PC-3 (cell line): ENCODE measurements at regions of chr18 and their contacts with region 1.

Region 1: DNA sequence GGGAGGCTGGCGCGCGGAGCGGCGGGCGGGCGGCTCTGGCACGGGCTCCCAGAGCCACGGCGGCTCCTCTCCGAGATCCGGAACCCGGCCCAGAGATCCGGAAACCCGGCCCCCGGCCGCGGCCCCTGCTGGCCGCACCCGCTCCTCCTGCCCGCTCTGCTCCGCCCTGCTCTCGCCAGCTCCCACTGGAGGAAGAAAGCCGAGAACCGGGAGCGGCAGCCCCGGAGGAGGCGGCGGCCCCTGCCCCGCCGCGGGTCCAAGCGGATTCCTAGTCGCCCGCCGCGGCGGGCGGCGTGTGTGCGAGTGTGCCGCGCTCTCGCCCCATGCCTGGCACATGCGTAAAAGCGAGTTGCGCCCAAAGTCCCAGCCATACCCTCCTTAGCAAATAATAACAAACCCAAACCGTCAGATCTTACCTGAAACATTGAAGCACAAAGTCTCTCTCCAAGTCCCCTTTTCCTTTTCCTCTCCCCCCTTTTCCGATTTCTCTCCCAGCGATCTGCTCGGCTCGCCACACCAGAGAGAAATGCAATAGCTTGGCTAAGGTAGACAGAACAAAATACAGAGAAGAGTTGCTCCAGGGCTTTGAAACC is 108.7 kb upstream of the KCTD1 start:
- DNase-seq: peak; percentile 68
- ATAC-seq: peak; percentile 73
- H3K4me3 ChIP-seq: peak overlapping the region; percentile 77
- H3K27ac ChIP-seq: no peak overlapping the region
- H3K4me1 ChIP-seq: peaks cover 10% of the 10 kb centered on the region
- H3K27me3 ChIP-seq: peaks cover 52% of the 10 kb centered on the region
- CTCF ChIP-seq: peak; percentile 25; the same call in 1 of the 2 replicates

Region 2: GRCh38 chr18:26002375-26002910 is 654.6 kb before region 1 on chr18:
- CTCF ChIA-PET with region 1: no interaction called
- POLR2A ChIA-PET with region 1: no interaction called
- intact Hi-C with region 1: no loop called
- DNase-seq: no peak
- ATAC-seq: no peak
- H3K4me3 ChIP-seq: no peak overlapping the region
- H3K27ac ChIP-seq: no peak overlapping the region
- H3K4me1 ChIP-seq: no peaks in the 10 kb centered on the region
- H3K27me3 ChIP-seq: no peaks in the 10 kb centered on the region
- CTCF ChIP-seq: no peak

Region 3: DNA sequence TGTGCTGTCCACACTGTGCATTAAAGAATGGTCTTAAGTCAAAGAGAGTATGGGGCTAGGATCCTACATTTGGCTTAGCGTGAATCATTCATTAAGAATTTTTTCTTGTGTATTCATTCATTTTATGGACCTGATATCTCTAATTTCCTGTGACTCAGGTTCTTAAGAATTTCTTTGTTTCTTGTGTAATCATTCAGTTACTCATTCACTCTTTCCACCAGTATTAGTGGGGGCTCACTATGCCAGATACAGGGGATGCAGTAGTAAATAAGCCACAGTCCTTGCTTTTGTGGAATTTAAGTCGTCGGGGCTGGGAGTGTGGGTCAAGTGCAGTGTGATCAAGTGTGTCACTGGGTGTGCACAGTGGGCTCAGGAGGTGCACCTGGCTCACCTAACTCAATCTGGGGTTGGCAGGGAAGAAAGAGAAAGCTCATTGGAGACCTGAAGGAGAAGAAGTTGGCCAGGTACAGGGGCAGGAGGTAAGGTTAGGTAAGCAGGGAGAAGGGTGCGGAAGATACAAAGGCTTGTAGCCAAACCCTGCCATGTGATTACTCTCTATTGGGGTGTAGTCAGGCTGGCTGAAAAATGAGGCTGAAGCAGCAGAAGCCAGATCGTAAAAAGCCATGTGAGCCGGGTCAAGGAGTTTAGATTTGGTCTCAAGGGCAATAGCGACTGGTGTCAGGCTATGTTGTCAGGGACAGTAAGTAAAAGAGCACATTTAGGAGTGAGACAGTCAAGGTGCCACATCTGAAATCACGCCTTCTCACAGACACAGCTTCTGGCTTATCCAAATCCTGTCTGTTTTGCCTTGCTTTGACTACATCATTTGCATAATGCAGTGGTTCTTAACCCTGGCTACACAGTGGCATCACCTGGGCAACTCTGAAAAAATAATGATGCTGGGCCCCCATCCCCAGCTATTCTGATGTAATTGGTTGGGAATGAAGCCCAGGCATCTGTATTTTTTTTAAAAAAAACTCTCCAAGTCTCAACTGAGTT is 175.8 kb before region 1 on chr18:
- CTCF ChIA-PET with region 1: no interaction called
- POLR2A ChIA-PET with region 1: no interaction called
- intact Hi-C with region 1: loop called (anchors 2 kb)
- DNase-seq: peak; percentile 98
- ATAC-seq: peak; percentile 83
- H3K4me3 ChIP-seq: peak overlapping the region; percentile 48
- H3K27ac ChIP-seq: peak overlapping the region; percentile 97
- H3K4me1 ChIP-seq: peaks cover 73% of the 10 kb centered on the region
- H3K27me3 ChIP-seq: no peaks in the 10 kb centered on the region
- CTCF ChIP-seq: no peak

Region 4: GRCh38 chr18:26746279-26747150 is 89.5 kb after region 1 on chr18:
- CTCF ChIA-PET with region 1: interaction called, 3 read pairs
- POLR2A ChIA-PET with region 1: no interaction called
- intact Hi-C with region 1: loop called (anchors 1 kb)
- DNase-seq: peak; percentile 67
- ATAC-seq: peak; percentile 58
- H3K4me3 ChIP-seq: peak overlapping the region; percentile 53
- H3K27ac ChIP-seq: peak overlapping the region; percentile 94
- H3K4me1 ChIP-seq: peaks cover 45% of the 10 kb centered on the region
- H3K27me3 ChIP-seq: no peaks in the 10 kb centered on the region
- CTCF ChIP-seq: no peak

Region 5: DNA sequence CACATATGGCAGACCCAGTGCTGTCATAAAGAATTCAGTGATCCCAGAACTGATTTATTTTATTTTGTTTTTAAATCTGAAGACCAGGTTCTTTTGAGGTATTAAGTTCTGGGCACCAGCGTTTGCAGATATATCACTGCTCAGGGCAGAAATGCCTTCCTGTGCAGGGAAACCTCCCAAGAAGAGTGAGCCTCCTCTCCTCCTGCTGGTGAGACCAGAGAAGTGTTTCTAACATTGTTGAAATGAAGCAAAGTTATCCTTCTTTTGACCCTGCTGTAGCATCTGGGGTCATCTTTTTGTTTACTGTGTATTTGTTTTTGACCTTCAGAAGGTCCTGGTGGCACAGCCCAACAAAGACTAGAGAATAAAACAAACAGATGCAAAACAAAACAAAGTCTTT is 114.5 kb after region 1 on chr18:
- CTCF ChIA-PET with region 1: no interaction called
- POLR2A ChIA-PET with region 1: no interaction called
- intact Hi-C with region 1: loop called (anchors 10 kb)
- DNase-seq: peak; percentile 34
- ATAC-seq: no peak
- H3K4me3 ChIP-seq: no peak overlapping the region
- H3K27ac ChIP-seq: no peak overlapping the region
- H3K4me1 ChIP-seq: no peaks in the 10 kb centered on the region
- H3K27me3 ChIP-seq: no peaks in the 10 kb centered on the region
- CTCF ChIP-seq: peak; percentile 55

Region 6: GRCh38 chr18:26888259-26888658 is 231.2 kb after region 1 on chr18:
- CTCF ChIA-PET with region 1: no interaction called
- POLR2A ChIA-PET with region 1: no interaction called
- intact Hi-C with region 1: no loop called
- DNase-seq: no peak
- ATAC-seq: no peak
- H3K4me3 ChIP-seq: no peak overlapping the region
- H3K27ac ChIP-seq: no peak overlapping the region
- H3K4me1 ChIP-seq: no peaks in the 10 kb centered on the region
- H3K27me3 ChIP-seq: peaks cover 23% of the 10 kb centered on the region
- CTCF ChIP-seq: no peak

Region 7: GRCh38 chr18:26963292-26963691 is 306.3 kb after region 1 on chr18:
- CTCF ChIA-PET with region 1: no interaction called
- POLR2A ChIA-PET with region 1: no interaction called
- intact Hi-C with region 1: loop called (anchors 10 kb)
- DNase-seq: peak; percentile 37
- ATAC-seq: peak; percentile 75
- H3K4me3 ChIP-seq: no peak overlapping the region
- H3K27ac ChIP-seq: no peak overlapping the region
- H3K4me1 ChIP-seq: no peaks in the 10 kb centered on the region
- H3K27me3 ChIP-seq: peaks cover 11% of the 10 kb centered on the region; the same call in 1 of the 2 replicates
- CTCF ChIP-seq: peak; percentile 50

Region 8: DNA sequence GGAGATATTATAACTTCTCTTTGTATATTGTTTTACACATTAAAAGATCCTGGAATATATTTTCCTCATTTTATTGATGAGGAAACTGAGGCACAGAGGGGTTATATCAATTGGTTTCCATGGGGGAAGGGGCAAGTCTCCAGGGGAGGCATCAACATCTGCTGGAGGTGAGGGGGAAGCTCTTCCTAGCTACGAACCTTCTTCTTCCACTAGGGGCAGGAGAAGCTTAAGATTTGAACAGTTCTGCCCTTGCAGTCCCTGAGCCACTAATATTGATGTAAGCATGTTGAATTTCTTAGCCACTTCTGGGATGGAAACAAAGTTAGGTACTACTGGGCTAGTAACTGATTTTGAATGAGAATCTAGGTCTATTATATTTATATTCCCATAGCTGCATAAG is 348.5 kb after region 1 on chr18:
- CTCF ChIA-PET with region 1: no interaction called
- POLR2A ChIA-PET with region 1: no interaction called
- intact Hi-C with region 1: loop called (anchors 10 kb)
- DNase-seq: peak; percentile 44
- ATAC-seq: peak; percentile 69
- H3K4me3 ChIP-seq: no peak overlapping the region
- H3K27ac ChIP-seq: no peak overlapping the region
- H3K4me1 ChIP-seq: no peaks in the 10 kb centered on the region
- H3K27me3 ChIP-seq: peaks cover 36% of the 10 kb centered on the region
- CTCF ChIP-seq: peak; percentile 62